ENCODE measurements at regions of chr2 and their contacts with region 1.

Region 1: DNA sequence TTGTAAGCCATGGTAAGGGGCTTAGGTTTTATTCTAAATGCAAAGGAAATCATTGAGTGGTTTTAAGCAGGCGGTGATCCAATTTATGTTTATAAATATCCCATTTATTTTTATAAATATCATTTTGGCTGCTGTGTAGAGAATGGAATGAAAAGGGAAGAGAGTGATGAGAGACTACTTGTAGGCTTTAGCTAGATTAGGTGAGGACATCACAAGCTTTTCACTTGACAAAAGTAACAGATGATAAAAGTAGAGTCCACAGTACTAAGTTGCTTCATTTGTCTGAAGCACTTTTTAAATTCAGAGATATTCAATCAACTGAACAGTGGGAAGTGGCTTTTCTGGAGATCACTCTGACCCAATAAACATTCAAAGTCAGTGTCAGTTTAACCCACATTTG is 65.4 kb upstream of the FSHR start:
- DNase-seq: no peak
- H3K4me3 ChIP-seq: no peak overlapping the region
- H3K27ac ChIP-seq: no peak overlapping the region
- H3K4me1 ChIP-seq: peaks cover 0 to 2% of the 10 kb centered on the region in 2 donors
- H3K27me3 ChIP-seq: no peaks in the 10 kb centered on the region
- CTCF ChIP-seq: no peak
- POLR2A ChIP-seq: no peak

Region 2: DNA sequence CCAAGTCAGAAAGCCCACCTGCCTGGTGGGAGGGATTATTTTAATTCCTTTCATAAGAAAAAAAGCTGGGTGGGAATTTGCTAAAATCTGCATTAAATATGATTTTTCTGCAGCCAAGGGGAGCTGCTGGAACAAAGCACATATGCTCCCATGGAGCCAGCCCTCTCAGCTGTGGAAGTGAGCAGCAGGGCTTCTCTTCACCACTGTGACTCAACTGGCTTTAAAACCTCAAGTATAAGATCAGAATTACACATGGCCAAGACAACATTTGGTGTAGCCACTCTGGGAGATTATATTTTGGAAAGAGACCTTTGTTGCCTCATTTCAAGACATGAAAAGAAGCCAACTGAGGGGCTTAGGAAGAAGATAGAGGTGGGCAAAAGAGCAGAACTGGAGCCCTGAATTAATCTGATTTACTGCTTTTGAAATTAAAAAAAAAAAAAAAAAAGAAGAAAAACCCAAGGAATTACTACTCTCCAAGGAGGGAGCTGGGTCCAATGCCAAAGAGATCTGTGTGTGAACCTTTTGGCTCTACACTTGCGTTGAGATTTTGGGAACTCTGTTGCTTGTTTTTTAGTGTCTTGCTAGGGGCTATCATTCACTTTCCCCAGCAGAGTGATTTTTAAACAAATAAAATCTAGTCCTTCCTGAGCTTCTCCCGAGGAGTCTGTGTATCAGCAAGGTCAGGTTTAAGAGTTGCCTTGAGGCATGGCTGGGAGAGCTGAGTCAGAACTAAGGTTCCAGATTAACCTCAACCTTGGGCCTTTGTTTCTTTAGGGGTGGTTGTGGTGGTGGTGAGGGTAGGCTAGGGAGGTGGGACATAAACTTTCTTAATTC is 470.2 kb before region 1 on chr2:
- intact Hi-C with region 1: no loop called
- DNase-seq: no peak
- H3K4me3 ChIP-seq: no peak overlapping the region
- H3K27ac ChIP-seq: no peak overlapping the region
- H3K4me1 ChIP-seq: no peaks in the 10 kb centered on the region
- H3K27me3 ChIP-seq: peaks cover 0 to under 1% of the 10 kb centered on the region in 2 donors
- CTCF ChIP-seq: no peak
- POLR2A ChIP-seq: no peak

Region 3: DNA sequence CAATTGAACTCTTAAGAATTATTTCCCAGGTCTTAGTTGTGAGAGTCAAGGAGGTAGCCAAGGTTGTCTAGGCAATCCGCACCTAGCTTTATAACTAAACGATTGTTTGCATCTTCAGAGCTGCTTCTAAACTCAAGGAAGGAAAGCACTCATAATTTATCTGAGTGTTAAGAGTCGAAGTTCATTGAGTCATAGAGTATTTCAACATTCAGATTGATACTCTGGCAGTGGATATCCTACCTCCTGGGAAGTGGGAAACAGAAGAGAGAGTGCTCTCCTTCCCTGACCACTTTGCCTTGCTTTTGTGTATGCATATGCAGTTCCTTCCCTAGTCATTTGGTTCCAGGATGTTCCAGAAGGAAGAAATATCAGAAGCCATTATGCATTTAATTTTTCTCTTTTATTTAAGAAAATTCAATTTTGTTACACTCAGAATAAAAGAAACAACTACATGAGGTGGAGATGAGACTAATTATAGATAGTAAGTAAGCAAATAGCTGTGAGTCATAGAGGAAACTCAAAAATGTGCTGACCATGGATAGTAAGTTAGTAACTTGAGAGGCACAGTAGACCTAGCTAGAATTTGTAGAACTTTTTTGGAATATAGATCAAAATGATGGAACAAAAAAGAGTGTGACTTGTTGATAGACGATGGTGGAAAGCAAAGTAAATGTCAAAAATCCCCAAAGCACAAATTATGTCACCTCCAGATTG is 30.1 kb before region 1 on chr2:
- intact Hi-C with region 1: loop called (anchors 2 kb)
- DNase-seq: no peak
- H3K4me3 ChIP-seq: no peak overlapping the region
- H3K27ac ChIP-seq: no peak overlapping the region
- H3K4me1 ChIP-seq: no peaks in the 10 kb centered on the region
- H3K27me3 ChIP-seq: no peaks in the 10 kb centered on the region
- CTCF ChIP-seq: no peak
- POLR2A ChIP-seq: no peak

Region 4: DNA sequence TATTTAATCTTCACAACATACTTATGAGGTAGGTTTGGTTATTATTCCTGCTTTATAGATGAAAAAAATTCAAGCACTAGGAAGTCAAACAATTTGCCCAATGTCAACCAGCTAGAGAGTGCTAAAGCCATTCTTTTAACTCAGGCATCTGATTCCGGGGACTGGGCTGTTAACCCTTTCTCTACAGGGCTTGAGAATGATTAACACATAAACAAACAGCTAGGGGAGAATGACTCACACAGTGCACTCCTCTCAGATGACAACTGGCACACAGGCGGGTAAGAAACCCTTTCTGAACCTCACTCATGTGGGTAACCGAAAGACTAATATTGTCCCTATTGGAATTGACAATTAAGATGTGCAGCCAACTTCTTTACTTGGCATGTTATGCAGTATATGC is 20.9 kb after region 1 on chr2:
- intact Hi-C with region 1: no loop called
- DNase-seq: no peak
- H3K4me3 ChIP-seq: no peak overlapping the region
- H3K27ac ChIP-seq: no peak overlapping the region
- H3K4me1 ChIP-seq: no peaks in the 10 kb centered on the region
- H3K27me3 ChIP-seq: no peaks in the 10 kb centered on the region
- CTCF ChIP-seq: no peak
- POLR2A ChIP-seq: no peak

Measured in breast epithelium (tissue), 4 donors.